Activated T-helper 2 cell treated with anti-CD3 and anti-CD28 coated beads, Interferon-gamma antibody, Interleukin-2, Interleukin-4, amounts not matched to agents 10 μg/mL and 5 μg/mL and 100 μg/mL, durations not matched to agents 14 hours and 24 hours and 36 hours (primary cell): ENCODE measurements at regions of chr5 and their contacts with region 1.

Region 1: DNA sequence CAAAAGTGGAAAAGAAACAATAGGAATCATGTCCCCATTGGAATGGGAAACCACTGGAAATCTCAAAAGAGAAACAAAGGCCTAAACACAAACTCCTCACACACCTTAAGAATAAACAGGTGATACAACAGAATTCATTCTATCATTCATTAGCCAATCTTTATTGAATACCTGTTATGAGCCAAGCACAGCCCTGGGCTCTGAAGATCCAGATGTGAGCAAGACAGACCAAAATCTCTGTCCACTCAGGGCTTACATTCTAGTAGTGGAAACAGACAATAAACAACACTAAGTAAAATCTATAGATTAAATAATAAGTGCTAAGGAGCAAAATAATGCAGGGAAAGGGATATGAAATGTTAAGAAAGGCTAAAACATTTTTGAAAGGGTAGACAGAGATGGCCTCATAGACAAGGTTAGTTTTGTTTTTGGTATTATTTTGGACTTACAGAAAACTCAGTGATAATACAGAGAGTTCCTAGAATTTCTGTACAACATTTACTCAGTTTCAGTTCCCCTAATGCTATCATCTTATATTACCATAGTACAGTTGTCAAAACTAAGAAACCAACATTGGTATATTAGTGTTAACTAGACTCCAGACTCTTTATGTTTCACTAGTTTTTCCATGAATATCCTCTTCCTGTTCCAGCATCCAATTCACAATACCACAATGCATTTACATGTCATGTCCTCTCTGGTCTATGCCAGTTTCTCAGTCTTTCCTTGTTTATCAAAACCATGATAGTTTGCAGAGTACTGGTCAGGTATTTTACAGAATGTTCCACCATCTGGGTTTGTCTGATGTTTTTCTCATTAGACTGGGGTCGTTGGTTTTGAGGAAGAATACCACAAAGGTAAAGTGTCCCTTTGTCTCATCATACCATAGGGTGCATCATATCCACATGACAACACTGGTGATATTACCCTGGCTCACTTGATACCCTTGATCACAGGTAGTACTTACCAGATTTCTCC is 103.7 kb downstream of the SIL1 start:
- DNase-seq: no peak
- H3K4me3 Mint-ChIP-seq: no peak overlapping the region
- H3K27ac Mint-ChIP-seq: peak overlapping the region; percentile 31
- H3K4me1 Mint-ChIP-seq: peaks cover 13% of the 10 kb centered on the region
- H3K27me3 Mint-ChIP-seq: no peaks in the 10 kb centered on the region

Region 2: GRCh38 chr5:139108063-139108824 is 13.8 kb after region 1 on chr5:
- intact Hi-C with region 1: no loop called
- DNase-seq: no peak
- H3K4me3 Mint-ChIP-seq: no peak overlapping the region
- H3K27ac Mint-ChIP-seq: no peak overlapping the region
- H3K4me1 Mint-ChIP-seq: no peaks in the 10 kb centered on the region
- H3K27me3 Mint-ChIP-seq: no peaks in the 10 kb centered on the region

Region 3: DNA sequence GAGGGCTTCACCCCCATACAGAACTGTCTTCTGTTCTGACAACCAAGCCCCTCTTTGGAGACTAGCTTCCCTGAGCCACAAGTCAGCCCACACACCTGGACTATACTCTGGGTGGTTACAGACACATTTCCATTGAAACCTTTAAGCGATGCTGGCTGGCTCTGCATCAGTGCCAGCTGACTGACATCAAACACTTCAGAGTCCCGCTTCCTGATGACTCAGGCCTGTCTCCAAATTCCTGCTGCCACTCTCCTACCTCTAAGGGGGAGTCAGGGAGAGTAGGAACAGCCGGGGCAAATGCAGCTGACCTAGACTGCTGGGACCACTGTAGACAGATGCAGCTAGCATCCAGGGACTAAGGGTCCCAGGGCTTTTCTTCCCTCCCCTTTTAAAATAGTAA is 44.4 kb after region 1 on chr5:
- intact Hi-C with region 1: loop called (anchors 2 kb)
- DNase-seq: no peak
- H3K4me3 Mint-ChIP-seq: no peak overlapping the region
- H3K27ac Mint-ChIP-seq: no peak overlapping the region
- H3K4me1 Mint-ChIP-seq: peaks cover 12% of the 10 kb centered on the region
- H3K27me3 Mint-ChIP-seq: no peaks in the 10 kb centered on the region